RWPE1 (cell line): ENCODE measurements at regions of chr5 and their contacts with region 1.

Region 1: DNA sequence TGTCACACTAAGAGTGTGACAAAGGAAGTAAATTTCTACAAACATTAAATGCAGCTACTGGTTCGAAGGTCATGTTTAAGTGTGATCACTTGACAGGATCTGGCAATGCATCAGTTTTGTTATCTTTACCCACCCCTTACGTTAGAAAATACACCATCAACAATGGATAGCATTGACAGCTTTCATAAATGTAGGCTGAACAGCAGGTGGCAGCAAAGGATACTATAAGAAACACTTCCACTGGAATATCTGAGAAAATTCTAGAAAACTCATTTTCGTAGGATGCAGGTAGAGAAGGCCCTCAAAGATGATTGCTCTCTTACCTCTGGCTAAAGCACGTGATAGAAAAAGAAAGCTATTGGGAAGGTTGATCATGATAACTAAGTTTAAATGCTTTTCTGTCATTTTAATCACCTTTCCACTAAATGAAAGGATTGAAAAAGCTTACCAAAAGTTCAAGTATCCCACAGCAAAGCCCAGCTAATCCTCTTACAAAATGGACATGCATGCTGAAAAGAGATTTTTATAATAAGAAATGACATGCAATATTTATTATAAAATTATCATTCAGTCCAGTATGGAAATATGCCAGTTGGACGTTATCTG is 292.5 kb downstream of the PARP8 start:
- DNase-seq: peak; percentile 46
- H3K27ac ChIP-seq: no peak overlapping the region
- CTCF ChIP-seq: peak; percentile 77

Region 2: GRCh38 chr5:51201024-51201423 is 242.1 kb after region 1 on chr5:
- CTCF ChIA-PET with region 1: no interaction called
- POLR2A ChIA-PET with region 1: no interaction called
- DNase-seq: no peak
- H3K27ac ChIP-seq: no peak overlapping the region
- CTCF ChIP-seq: no peak

Region 3: DNA sequence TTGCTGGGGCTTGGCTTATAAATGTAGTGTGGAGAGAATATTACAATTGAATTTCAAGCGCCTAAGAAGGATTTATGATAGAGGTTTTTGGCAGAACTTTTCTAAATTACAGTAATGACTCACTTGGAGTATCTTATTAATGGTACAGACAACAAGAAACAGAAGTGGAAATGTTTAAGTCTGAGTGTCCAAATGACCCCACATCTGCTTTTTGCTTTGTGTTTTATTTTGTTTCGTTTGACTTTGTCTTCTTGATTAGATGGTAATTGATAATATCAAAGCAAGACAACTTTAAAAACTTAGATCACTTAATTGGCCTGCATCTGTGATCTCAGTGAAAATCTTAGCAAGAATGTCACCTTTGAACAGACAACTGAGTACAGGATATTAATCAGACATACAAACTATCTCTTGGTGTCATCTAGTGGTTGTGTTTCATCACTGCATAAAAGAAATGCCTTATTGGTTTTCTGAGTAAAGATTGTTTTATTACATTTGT is 1001.7 kb after region 1 on chr5:
- CTCF ChIA-PET with region 1: interaction called, 11 read pairs
- POLR2A ChIA-PET with region 1: no interaction called
- DNase-seq: peak; percentile 29
- H3K27ac ChIP-seq: no peak overlapping the region
- CTCF ChIP-seq: peak; percentile 91